ENCODE measurements at regions of chr10 and their contacts with region 1.

Region 1: GRCh38 chr10:73772280-73773151 is 9.3 kb upstream of the CHCHD1 start:
- DNase-seq: peak; percentile 87
- ATAC-seq: peak; percentile 77
- H3K4me3 Mint-ChIP-seq: peak overlapping the region; percentile 94
- H3K27ac Mint-ChIP-seq: peak overlapping the region; percentile 95
- H3K4me1 Mint-ChIP-seq: peaks cover 64% of the 10 kb centered on the region
- H3K27me3 Mint-ChIP-seq: no peaks in the 10 kb centered on the region

Region 2: GRCh38 chr10:73759512-73760115 is 12.9 kb before region 1 on chr10:
- CTCF ChIA-PET with region 1: interaction called, 27 read pairs
- POLR2A ChIA-PET with region 1: interaction called, 19 read pairs
- DNase-seq: peak; percentile 68
- ATAC-seq: peak; percentile 87
- H3K4me3 Mint-ChIP-seq: peak overlapping the region; percentile 35
- H3K27ac Mint-ChIP-seq: peak overlapping the region; percentile 91
- H3K4me1 Mint-ChIP-seq: peaks cover 46% of the 10 kb centered on the region
- H3K27me3 Mint-ChIP-seq: no peaks in the 10 kb centered on the region

Region 3: DNA sequence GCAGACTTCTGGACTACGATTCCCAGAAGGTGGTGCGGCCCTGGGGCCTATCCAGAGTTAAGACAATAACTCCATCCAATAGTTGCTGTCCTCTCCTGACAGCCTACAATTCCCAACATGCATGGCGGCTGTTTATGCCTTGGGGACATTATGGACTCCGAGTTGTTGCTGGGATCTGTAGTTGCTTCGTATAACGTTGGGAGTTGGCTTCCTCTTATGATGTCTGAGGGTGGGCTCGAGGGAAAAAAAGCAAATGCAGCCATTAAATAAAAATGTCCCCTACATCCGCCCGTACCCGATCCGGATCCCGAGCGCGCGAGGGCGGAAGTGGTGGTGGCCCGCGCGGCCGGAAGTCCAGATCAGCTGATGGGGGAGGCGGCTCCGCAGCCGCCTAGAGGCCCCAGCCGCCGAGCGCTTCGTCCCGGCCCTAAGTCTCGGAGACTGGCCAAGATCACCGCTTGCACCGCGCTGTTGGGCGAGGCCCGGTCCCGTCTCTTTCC is 12.8 kb after region 1 on chr10 and contains the start of gene ZSWIM8:
- CTCF ChIA-PET with region 1: interaction called, 101 read pairs
- POLR2A ChIA-PET with region 1: interaction called, 49 read pairs
- DNase-seq: peak; percentile 92
- ATAC-seq: peak; percentile 86
- H3K4me3 Mint-ChIP-seq: peak within 1 kb of the TSS; percentile 98
- H3K27ac Mint-ChIP-seq: peak within 1 kb of the TSS; percentile 99
- H3K4me1 Mint-ChIP-seq: peaks cover 50% of the 10 kb centered on the region
- H3K27me3 Mint-ChIP-seq: no peaks in the 10 kb centered on the region
- total RNA-seq, gene ZSWIM8: 58.3 to 69.3 TPM

Region 4: DNA sequence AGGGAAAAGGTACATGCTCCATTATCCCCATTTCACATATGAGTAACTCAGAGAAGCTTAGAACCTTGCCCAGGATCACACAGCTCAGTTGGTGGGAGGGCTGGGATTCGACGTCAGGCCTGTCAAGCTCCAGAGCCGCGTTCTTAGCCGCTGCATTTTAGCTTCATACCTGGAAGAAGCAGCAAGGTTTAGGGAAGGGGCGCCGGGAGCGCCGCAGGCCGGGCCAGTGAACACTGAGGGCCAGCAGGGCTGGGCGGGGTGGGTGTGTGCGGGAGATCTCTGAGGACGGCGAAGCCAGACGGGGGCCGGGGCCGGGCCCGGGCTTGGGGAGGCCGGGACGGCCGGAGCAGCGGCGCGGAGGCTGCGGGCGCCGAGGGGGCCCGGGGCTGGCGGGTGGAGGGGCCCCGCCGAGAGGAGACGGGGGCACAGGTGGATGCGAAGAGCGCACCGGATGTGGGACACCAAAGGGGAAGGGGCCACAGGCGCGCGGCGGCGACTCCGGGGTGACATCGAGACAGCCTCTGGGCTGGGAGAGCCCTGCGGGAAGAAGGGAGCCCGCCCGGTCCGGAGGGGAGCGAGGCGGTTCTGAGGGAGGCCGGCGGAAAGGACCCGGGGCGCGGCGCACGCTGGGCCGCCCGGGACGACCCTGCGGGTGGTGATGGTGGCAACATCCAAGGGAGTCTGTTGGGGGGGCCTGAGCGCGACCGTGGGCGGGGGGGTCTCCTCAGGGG is 38.4 kb after region 1 on chr10:
- CTCF ChIA-PET with region 1: interaction called, 8 read pairs
- POLR2A ChIA-PET with region 1: interaction called, 17 read pairs
- DNase-seq: peak; percentile 71
- ATAC-seq: peak; percentile 37
- H3K4me3 Mint-ChIP-seq: peak overlapping the region; percentile 92
- H3K27ac Mint-ChIP-seq: peak overlapping the region; percentile 93
- H3K4me1 Mint-ChIP-seq: peaks cover 48% of the 10 kb centered on the region
- H3K27me3 Mint-ChIP-seq: no peaks in the 10 kb centered on the region

Measured in activated CD8-positive, alpha-beta T cell treated with anti-CD3 and anti-CD28 coated beads, Interleukin-2, amount 10 ng/mL, durations not matched to agents 7 days and 5 days (primary cell).